CD4-positive, alpha-beta memory T cell (primary cell): ENCODE measurements at regions of chr12 and their contacts with region 1.

Region 1: DNA sequence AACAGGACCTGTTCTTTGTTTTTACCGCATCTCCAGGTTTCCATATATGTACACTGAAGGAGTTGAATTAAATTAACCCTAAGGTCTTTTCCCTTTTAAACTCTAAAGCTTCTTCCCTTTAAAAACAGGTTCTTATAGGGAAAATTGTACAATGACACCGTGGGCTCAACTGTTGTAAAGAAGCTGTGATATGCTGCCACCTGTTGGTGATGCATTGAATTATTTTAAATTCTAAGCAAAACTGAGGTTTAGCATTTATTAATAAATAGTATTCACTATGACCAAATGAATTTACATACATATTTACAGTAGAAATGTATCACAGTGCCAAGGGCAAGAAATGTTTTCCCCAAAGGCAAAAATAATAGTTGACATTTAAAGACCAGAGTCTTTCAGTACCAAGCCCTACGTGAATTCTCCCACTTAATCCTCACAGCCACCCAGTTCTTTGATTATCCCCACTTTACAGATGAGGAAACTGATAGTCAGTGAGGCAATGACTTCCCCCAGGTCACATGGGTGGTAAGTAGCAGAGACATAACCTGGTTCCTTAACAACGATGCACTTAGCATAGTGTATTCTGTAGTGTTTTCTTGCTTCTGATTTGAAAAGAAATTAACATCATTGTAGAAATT is 35.7 kb upstream of the TMEM263 start:
- DNase-seq: peak in 4 of 5 donors; percentile 28 to 45 (median 40)
- H3K4me3 ChIP-seq: no peak overlapping the region
- H3K4me3 Mint-ChIP-seq: no peak overlapping the region
- H3K27ac ChIP-seq: no peak overlapping the region
- H3K27ac Mint-ChIP-seq: no peak overlapping the region
- H3K4me1 ChIP-seq: peaks cover 7% of the 10 kb centered on the region
- H3K4me1 Mint-ChIP-seq: peaks cover 8 to 9% (median 9%) of the 10 kb centered on the region in 4 donors
- H3K27me3 ChIP-seq: no peaks in the 10 kb centered on the region
- H3K27me3 Mint-ChIP-seq: peaks cover 7 to 8% of the 10 kb centered on the region in 2 donors

Region 2: DNA sequence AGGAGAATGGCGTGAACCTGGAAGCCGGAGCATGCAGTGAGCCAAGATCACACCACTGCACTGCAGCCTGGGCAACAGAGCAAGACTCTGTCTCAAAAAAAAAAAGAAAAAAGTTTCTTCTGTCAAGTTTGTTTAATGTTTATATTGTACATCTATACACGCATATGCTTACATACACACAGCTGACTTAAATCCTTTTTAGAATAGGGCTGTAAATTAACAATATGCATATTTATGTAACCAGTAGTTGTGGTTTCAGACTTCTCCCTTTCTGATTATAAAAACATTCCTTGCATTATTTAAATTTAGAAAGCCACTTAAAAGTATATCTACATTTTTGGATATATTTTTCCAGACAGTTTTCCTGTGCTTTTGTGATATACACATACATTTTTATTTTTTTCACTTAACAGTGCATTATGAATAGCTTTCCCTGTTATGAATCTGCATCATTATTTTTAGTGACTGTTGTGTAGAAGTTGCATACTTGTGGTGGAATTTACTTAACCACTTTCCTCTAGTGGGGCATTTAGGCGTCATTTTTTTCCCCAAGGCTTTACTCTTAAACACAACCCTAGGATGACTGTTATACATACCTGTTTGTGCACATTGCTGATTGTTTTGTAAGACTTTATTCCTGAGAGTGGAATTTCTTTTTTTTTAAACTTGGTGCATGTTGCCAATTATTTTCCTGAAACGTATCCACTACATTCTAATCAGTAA is 533.1 kb before region 1 on chr12:
- CTCF ChIA-PET with region 1: interaction called, 54 read pairs
- POLR2A ChIA-PET with region 1: no interaction called
- intact Hi-C with region 1: loop called (anchors 1 kb)
- DNase-seq: no peak
- H3K4me3 ChIP-seq: no peak overlapping the region
- H3K4me3 Mint-ChIP-seq: no peak overlapping the region
- H3K27ac ChIP-seq: no peak overlapping the region
- H3K27ac Mint-ChIP-seq: no peak overlapping the region
- H3K4me1 ChIP-seq: no peaks in the 10 kb centered on the region
- H3K4me1 Mint-ChIP-seq: peaks cover 0 to 4% (median 0%) of the 10 kb centered on the region in 4 donors
- H3K27me3 ChIP-seq: no peaks in the 10 kb centered on the region
- H3K27me3 Mint-ChIP-seq: no peaks in the 10 kb centered on the region

Region 3: GRCh38 chr12:106736051-106736957 is 183.7 kb before region 1 on chr12:
- CTCF ChIA-PET with region 1: interaction called, 3 read pairs
- POLR2A ChIA-PET with region 1: no interaction called
- intact Hi-C with region 1: loop called (anchors 1 kb)
- DNase-seq: peak in 4 of 5 donors; percentile 25 to 40 (median 31)
- H3K4me3 ChIP-seq: no peak overlapping the region
- H3K4me3 Mint-ChIP-seq: no peak overlapping the region
- H3K27ac ChIP-seq: no peak overlapping the region
- H3K27ac Mint-ChIP-seq: peak overlapping the region in 1 of 7 donors; percentile 65
- H3K4me1 ChIP-seq: no peaks in the 10 kb centered on the region
- H3K4me1 Mint-ChIP-seq: peaks cover 1 to 14% (median 9%) of the 10 kb centered on the region in 4 donors
- H3K27me3 ChIP-seq: no peaks in the 10 kb centered on the region
- H3K27me3 Mint-ChIP-seq: no peaks in the 10 kb centered on the region